BJ (cell line): ENCODE measurements at regions of chr3 and their contacts with region 1.

Region 1: GRCh38 chr3:129052675-129053074 is 7.9 kb upstream of the GP9 start:
- DNase-seq: no peak
- H3K4me3 ChIP-seq: no peak overlapping the region
- H3K27me3 ChIP-seq: peaks cover 9% of the 10 kb centered on the region
- CTCF ChIP-seq: no peak

Region 2: GRCh38 chr3:129039271-129040038 is 13.2 kb before region 1 on chr3:
- CTCF ChIA-PET with region 1: interaction called, 26 read pairs
- POLR2A ChIA-PET with region 1: interaction called, 5 read pairs
- DNase-seq: no peak
- H3K4me3 ChIP-seq: no peak overlapping the region
- H3K27me3 ChIP-seq: peaks cover 25% of the 10 kb centered on the region
- CTCF ChIP-seq: no peak

Region 3: DNA sequence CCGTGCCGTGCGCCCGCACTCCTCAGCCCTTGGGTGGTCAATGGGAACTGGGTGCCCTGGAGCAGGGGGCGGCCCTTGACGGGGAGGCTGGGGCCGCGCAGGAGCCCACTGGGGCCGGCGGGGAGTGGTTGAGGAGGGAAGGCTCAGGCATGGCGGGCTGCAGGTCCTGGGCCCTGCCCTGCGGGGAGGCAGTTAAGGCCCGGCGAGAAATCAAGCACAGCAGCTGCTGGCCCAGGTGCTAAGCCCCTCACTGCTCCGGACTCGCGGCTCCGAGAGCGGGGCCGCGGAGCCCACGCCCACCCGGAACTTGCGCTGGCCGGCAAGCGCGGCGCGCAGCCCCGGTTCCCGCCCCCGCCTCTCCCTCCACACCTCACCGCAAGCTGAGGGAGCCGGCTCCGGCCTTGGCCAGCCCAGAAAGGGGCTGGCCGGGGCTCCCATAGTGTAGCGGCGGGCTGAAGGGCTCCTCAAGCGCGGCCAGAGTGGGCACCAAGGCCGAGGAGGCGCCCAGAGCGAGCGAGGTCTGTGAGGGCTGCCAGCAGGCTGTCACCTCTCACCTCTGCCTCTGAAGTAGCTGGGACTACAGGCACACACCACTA is 15.7 kb after region 1 on chr3:
- CTCF ChIA-PET with region 1: interaction called, 68 read pairs
- POLR2A ChIA-PET with region 1: no interaction called
- DNase-seq: no peak
- H3K4me3 ChIP-seq: peak overlapping the region; percentile 27
- H3K27me3 ChIP-seq: peaks cover 4% of the 10 kb centered on the region
- CTCF ChIP-seq: no peak

Region 4: DNA sequence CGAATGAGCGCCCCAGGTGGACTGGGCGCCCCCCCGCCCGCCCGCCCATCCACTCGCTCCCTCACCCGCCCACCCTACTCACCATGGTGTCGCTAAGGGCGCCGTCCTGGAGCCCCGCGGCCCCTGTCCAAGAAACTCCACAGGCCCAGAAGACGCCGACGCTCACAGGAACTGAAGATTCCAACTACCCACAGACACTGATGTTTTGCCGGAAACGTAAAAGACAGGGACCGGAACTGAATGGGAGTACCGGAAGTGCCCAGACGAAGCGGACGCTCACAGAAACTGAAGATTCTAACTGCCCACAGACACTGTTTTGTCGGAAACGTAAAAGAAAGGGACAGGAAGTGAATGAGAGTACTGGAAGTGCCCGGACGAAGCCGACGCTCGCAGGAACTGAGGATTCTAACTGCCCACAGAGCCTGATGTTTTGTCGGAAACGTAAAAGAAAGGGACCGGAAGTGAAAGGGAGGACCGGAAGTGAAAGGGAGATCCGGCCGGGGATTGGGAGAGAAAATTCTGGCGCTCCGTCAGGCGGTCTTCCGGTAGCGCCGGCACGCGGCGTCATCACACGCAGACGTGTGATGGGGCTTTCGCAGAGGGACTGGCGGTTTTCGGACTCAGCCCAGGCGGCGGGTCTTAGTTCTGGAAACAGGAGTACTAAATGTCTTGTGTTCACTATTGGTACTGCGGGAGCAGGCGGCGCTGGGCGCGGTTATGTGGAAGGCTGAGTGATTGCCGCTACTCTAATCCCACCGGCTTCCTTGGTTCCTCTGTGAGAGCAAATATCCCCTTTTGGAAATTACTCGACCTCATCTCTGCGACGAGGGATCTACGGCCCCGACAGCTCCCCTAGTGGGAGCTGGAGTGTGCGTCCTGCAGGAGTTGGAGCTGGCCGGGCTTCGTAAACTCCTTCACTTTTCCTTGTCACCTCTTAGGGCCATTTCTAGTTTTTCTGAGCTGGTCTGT is 108.5 kb after region 1 on chr3 and contains the start of gene ISY1:
- CTCF ChIA-PET with region 1: interaction called, 10 read pairs
- POLR2A ChIA-PET with region 1: no interaction called
- DNase-seq: peak; percentile 65
- H3K4me3 ChIP-seq: peak within 1 kb of the TSS; percentile 83
- H3K27me3 ChIP-seq: no peaks in the 10 kb centered on the region
- CTCF ChIP-seq: peak; percentile 91
- polyA plus RNA-seq, gene ISY1: 21.0 and 34.2 TPM in 2 replicates

Region 5: GRCh38 chr3:129238945-129239706 is 186.5 kb after region 1 on chr3:
- CTCF ChIA-PET with region 1: interaction called, 91 read pairs
- POLR2A ChIA-PET with region 1: no interaction called
- DNase-seq: no peak
- H3K4me3 ChIP-seq: no peak overlapping the region
- H3K27me3 ChIP-seq: no peaks in the 10 kb centered on the region
- CTCF ChIP-seq: no peak